Motor neuron (in vitro differentiated cells): ENCODE measurements at regions of chr7 and their contacts with region 1.

Region 1: GRCh38 chr7:20624666-20625385 is 9.4 kb downstream of the ABCB5 start:
- ATAC-seq: no peak
- H3K4me3 ChIP-seq: no peak overlapping the region
- H3K27ac ChIP-seq: no peak overlapping the region
- H3K4me1 ChIP-seq: no peaks in the 10 kb centered on the region

Region 2: DNA sequence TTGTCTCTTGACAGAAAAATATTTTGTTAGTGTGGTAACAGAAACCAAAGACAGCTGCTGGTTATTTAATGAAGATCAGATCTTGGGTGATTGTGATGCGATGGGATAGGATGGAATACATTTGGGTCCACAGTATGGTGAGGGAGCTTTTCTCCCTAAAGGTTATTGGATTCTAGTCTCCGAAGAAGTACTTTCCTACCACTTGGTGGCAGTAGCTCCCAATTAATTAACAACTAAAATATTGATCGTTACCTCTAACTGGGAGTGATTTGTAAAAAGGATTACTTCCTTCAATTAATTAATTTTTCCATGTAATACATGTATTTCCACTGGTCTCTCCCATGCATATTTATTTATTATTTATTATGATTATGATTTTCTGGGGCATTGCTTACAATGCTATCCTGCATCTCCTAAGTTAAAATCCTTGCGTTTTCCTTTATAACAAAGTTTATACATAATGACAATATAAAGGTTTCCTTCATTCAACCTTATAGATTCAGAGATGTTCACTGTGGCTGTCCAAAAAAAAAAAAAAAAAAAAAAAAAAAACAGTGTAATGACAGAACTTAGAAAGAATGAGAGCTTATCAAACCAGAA is 877.0 kb before region 1 on chr7:
- in situ Hi-C with region 1: loop called in 2 of 9 experiments (anchors 25 kb)
- ATAC-seq: peak in 6 of 8 experiments; percentile 22 to 49 (median 32)
- H3K4me3 ChIP-seq: no peak overlapping the region
- H3K27ac ChIP-seq: no peak overlapping the region
- H3K4me1 ChIP-seq: peaks cover 2 to 10% of the 10 kb centered on the region in 2 donors

Region 3: GRCh38 chr7:19982841-19983835 is 641.7 kb before region 1 on chr7:
- in situ Hi-C with region 1: loop called in 1 of 9 experiments (anchors 25 kb)
- ATAC-seq: peak in 3 of 8 experiments; percentile 88 to 96 (median 95)
- H3K4me3 ChIP-seq: no peak overlapping the region
- H3K27ac ChIP-seq: no peak overlapping the region
- H3K4me1 ChIP-seq: no peaks in the 10 kb centered on the region

Region 4: DNA sequence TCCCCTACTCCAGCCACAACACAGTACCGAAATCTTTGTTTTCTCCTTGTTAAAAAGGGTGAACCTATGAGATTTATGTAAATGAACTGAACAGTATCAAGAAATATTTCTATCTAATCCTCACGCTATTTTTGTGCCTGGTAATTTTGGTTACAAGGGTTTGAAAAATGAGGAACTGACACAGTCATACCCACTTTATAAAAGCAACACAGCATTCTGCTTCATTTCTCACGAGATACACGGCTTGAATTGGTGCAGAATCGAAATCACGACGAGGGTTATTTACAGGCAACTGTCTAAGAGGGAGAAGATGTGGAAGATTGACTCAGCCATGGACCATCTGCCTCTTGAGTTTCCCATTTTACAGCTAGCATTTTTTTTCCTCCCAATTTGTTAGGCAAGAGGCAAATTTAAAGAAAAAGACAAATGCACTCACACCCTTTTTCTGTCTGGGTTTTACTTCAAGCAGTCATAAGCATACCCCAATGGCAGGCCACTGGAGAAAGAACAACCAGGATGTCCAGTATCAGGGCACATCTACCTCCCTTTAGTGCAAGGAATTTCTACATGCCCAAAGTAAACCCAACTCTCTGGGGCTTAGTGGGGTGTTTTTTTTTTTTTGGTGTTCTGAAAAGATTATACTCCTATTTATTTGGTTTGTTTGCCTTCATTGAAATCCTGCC is 186.0 kb before region 1 on chr7:
- in situ Hi-C with region 1: no loop called
- ATAC-seq: no peak
- H3K4me3 ChIP-seq: no peak overlapping the region
- H3K27ac ChIP-seq: no peak overlapping the region
- H3K4me1 ChIP-seq: peaks cover 5 to 7% of the 10 kb centered on the region in 2 donors